ENCODE measurements at regions of chr9 and their contacts with region 1.

Region 1: GRCh38 chr9:98860871-98861293 is 53.4 kb downstream of the GALNT12 start:
- DNase-seq: no peak
- ATAC-seq: peak; percentile 80

Region 2: DNA sequence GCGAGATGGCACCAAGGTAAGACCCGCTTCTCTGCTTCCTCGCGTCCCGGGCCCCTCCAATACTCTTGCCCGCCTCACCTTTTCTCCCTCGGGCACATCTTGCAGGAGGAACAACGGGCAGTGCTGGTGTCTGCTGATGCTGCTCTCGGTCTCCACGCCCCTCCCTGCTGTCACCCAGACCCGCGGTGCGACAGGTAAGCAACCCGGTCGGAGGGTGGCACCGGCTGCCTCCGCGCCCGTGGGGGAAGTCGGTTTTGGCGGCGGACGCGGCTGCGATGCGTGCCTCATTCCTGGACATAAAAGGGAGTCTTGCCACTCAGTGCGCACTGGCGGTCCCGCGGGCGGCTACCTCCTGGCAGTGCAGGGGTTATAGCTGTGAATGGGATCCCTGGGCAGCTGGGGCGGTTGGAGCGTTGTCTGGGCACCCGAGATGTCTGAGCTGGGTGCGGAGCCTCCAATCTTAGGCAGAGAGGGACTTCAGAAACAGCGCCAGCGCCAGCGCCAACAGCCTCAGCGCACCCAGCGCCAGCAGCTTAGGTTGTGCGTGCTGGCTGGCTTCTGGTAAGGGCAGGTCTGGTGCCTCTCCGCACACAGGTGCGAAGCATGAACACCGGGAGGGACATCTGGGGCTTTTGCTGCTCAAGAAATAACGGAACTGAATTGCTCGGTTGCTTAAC is 83.3 kb after region 1 on chr9:
- intact Hi-C with region 1: loop called (anchors 10 kb)
- DNase-seq: peak; percentile 68
- ATAC-seq: peak; percentile 38

Region 3: GRCh38 chr9:98998441-98999151 is 137.7 kb after region 1 on chr9:
- intact Hi-C with region 1: loop called (anchors 1 kb)
- DNase-seq: peak; percentile 90
- ATAC-seq: peak; percentile 85

Region 4: DNA sequence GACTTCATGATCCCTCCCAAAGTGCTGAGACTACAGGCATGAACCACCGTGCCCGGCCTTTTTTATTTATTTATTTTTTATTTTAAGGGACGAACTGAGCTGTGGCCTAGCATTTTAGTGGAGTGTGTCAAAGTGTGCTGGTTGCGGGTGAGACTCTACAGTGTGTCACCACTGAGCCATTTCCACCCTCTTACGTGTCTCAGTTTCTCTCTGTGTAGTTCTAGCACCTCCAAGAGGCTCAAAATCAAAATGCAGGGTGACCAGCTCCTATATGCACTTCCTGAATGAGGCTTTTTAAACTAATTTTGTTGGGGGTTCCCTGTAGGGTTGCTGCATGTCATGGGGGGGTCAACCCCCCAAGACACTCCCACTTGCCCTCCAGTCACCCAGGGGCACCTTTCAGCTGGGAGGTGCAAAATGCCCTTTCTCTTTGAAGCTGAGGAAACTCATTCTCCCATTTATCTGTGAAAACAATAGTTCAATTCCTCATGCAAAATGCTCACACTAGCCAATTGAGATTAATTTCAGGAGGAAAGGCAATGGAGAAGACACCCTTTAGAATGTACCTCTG is 152.1 kb after region 1 on chr9:
- intact Hi-C with region 1: loop called (anchors 2 kb)
- DNase-seq: no peak
- ATAC-seq: peak; percentile 73

Region 5: DNA sequence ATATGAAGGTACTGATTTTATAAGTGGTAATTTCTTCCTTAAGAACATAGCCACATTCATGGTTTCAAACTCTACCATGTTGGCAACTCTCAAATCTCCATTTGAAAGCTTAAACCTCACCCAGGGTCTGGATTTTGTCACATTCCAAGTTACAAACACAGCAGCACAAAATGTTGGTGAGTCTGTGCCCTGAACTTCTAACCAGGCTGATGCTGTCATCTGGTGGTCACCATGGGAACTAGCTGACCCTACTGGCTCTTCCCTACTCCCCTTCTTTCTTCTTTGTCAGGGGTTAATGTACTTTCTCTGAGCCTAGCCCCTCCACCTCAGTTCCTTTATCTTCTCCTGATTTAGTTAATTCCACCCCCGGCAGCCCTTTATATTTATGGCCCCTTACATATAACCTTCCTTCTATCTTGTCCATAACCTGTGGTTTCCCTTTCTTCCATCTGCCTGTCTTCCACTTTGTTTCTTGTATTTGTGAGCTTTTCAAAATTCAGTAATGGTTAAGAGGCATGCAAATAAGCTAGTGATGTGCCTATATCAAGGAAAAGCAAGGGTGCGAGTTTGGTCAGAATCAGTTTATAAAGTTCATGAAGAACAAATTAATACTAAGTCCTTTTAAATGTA is 279.9 kb after region 1 on chr9:
- intact Hi-C with region 1: loop called (anchors 1 kb)
- DNase-seq: no peak
- ATAC-seq: peak; percentile 85

Measured in Right ventricle myocardium inferior (tissue), 1 donor.